Naive thymus-derived CD4-positive, alpha-beta T cell (primary cell): ENCODE measurements at regions of chr19 and their contacts with region 1.

Region 1: DNA sequence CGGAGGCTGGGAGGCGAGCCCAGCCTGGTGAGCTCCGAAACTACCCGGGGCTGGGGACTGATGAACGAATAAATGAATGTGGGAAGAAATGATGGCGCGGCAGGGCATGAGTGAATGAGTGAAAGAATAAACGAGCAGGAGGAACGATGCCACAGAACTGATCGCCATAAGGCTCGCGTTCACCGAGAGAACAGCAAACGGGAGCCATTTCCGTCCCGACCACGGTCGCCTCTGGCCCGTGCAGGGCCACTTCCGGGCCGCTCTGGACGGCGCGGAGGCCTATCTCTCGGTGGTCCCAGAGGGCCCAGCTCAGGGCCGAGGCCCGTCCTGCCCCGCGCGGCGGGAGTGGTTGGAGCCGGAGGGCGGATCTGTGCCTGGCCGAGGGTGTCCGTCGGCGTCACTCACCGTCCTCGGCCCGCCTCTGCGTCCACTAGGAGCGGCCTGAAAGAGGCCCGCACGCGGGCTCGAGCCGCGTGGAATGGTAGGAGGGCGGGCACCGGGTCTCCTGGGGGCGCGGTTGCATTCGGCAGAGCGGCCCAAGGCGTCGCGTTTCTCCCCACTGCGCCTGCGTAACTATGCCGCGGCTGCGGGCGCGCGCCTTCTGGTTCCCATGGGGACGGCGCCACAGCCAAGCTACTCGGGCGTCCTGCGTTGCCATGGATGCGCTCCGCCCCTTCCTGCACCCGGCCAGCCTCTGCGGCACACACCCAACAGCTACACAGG is at the start of gene ZNF497:
- DNase-seq: peak; percentile 91 to 96 (median 95)
- ATAC-seq: peak; percentile 92
- H3K4me3 ChIP-seq: peak within 1 kb of the TSS; percentile 99
- H3K4me3 Mint-ChIP-seq: peak within 1 kb of the TSS; percentile 89 to 99 (median 95)
- H3K27ac ChIP-seq: peak within 1 kb of the TSS; percentile 78
- H3K27ac Mint-ChIP-seq: peak within 1 kb of the TSS; percentile 71 to 96 (median 90)
- H3K4me1 ChIP-seq: peaks cover 5 to 7% of the 10 kb centered on the region in 2 donors
- H3K4me1 Mint-ChIP-seq: peaks cover 7 to 21% (median 11%) of the 10 kb centered on the region in 7 donors
- H3K27me3 ChIP-seq: no peaks in the 10 kb centered on the region
- H3K27me3 Mint-ChIP-seq: peaks cover 0 to 5% (median 0%) of the 10 kb centered on the region in 5 donors
- total RNA-seq, gene ZNF497: 1.0 to 2.7 (median 1.8) TPM

Region 2: GRCh38 chr19:58252102-58252685 is 110.2 kb before region 1 on chr19:
- CTCF ChIA-PET with region 1: no interaction called
- POLR2A ChIA-PET with region 1: no interaction called
- intact Hi-C with region 1: no loop called
- DNase-seq: no peak
- ATAC-seq: no peak
- H3K4me3 ChIP-seq: no peak overlapping the region
- H3K4me3 Mint-ChIP-seq: no peak overlapping the region
- H3K27ac ChIP-seq: no peak overlapping the region
- H3K27ac Mint-ChIP-seq: no peak overlapping the region
- H3K4me1 ChIP-seq: no peaks in the 10 kb centered on the region
- H3K4me1 Mint-ChIP-seq: no peaks in the 10 kb centered on the region
- H3K27me3 ChIP-seq: no peaks in the 10 kb centered on the region
- H3K27me3 Mint-ChIP-seq: no peaks in the 10 kb centered on the region

Region 3: GRCh38 chr19:58317476-58318072 is 44.9 kb before region 1 on chr19:
- CTCF ChIA-PET with region 1: no interaction called
- POLR2A ChIA-PET with region 1: no interaction called
- intact Hi-C with region 1: no loop called
- DNase-seq: no peak
- ATAC-seq: no peak
- H3K4me3 ChIP-seq: no peak overlapping the region
- H3K4me3 Mint-ChIP-seq: no peak overlapping the region
- H3K27ac ChIP-seq: no peak overlapping the region
- H3K27ac Mint-ChIP-seq: no peak overlapping the region
- H3K4me1 ChIP-seq: no peaks in the 10 kb centered on the region
- H3K4me1 Mint-ChIP-seq: no peaks in the 10 kb centered on the region
- H3K27me3 ChIP-seq: no peaks in the 10 kb centered on the region
- H3K27me3 Mint-ChIP-seq: no peaks in the 10 kb centered on the region

Region 4: DNA sequence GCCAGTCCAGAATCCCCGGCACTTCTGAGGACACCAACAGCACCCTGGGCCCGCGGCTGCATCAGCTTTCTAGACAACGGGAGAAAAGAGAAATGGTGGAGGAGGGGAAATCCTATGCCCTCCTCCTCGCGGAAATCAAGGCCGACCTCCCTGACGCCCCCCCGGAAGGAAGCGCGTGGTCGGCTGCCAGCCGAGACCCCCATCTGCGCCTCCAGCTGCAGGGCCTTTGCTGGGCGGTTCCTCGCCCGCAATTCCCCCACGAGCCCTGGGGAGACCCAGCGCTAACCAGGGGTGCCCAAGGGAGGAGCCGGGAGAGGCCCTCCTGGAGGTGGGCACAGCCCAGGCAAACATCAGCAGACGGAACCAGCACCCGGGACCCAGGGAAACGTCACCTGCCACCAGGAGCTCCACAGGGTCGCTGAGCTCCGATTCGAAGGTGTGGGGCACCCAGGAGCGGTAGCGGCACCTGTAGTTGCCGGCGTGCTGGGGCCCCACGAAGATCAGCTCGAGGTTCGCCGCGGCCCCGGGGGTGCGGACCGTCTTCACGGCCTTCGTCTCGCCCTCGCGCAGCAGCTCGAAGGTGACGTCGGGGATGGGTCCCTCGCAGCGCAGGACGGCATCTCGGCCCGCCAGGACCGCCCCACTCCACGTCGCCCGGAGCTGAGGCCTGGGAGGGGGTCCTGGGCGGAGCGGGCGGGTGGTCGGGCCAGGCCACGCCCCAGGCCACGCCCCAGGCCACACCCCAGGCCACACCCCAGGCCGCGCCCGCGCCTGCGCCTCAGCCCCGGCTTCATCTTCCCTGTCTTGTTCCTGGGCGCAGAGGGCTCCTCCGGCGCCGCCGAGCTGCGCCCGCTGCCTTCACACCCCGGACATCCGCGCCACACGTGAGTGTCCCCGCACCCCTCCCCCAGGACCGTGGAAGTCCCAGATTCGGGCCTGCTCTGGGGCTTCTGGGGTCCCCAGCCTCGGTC is 15.2 kb before region 1 on chr19:
- CTCF ChIA-PET with region 1: no interaction called
- POLR2A ChIA-PET with region 1: interaction called, 12 read pairs
- intact Hi-C with region 1: loop called (anchors 1 kb)
- DNase-seq: peak; percentile 50 to 78 (median 68)
- ATAC-seq: peak; percentile 98
- H3K4me3 ChIP-seq: peak overlapping the region; percentile 77
- H3K4me3 Mint-ChIP-seq: peak overlapping the region; percentile 86 to 97 (median 92)
- H3K27ac ChIP-seq: peak overlapping the region; percentile 73
- H3K27ac Mint-ChIP-seq: peak overlapping the region; percentile 71 to 93 (median 85)
- H3K4me1 ChIP-seq: peaks cover 0 to 7% of the 10 kb centered on the region in 2 donors
- H3K4me1 Mint-ChIP-seq: peaks cover 23 to 36% (median 29%) of the 10 kb centered on the region in 7 donors
- H3K27me3 ChIP-seq: no peaks in the 10 kb centered on the region
- H3K27me3 Mint-ChIP-seq: peaks cover 0 to 5% (median 0%) of the 10 kb centered on the region in 5 donors

Region 5: GRCh38 chr19:58386576-58387337 is 24.3 kb after region 1 on chr19 and contains the start of gene RPS5:
- CTCF ChIA-PET with region 1: no interaction called
- POLR2A ChIA-PET with region 1: interaction called, 12 read pairs
- intact Hi-C with region 1: loop called (anchors 1 kb)
- DNase-seq: peak; percentile 84 to 98 (median 96)
- ATAC-seq: peak; percentile 97
- H3K4me3 ChIP-seq: peak within 1 kb of the TSS; percentile 75
- H3K4me3 Mint-ChIP-seq: peak within 1 kb of the TSS; percentile 89 to 96 (median 94)
- H3K27ac ChIP-seq: peak within 1 kb of the TSS; percentile 94
- H3K27ac Mint-ChIP-seq: peak within 1 kb of the TSS; percentile 94 to 99 (median 97)
- H3K4me1 ChIP-seq: peaks cover 26% of the 10 kb centered on the region in 2 donors
- H3K4me1 Mint-ChIP-seq: peaks cover 22 to 59% (median 45%) of the 10 kb centered on the region in 7 donors
- H3K27me3 ChIP-seq: no peaks in the 10 kb centered on the region
- H3K27me3 Mint-ChIP-seq: peaks cover 0 to 3% (median 0%) of the 10 kb centered on the region in 5 donors
- total RNA-seq, gene RPS5: 911 to 1,684 (median 1,502) TPM

Region 6: DNA sequence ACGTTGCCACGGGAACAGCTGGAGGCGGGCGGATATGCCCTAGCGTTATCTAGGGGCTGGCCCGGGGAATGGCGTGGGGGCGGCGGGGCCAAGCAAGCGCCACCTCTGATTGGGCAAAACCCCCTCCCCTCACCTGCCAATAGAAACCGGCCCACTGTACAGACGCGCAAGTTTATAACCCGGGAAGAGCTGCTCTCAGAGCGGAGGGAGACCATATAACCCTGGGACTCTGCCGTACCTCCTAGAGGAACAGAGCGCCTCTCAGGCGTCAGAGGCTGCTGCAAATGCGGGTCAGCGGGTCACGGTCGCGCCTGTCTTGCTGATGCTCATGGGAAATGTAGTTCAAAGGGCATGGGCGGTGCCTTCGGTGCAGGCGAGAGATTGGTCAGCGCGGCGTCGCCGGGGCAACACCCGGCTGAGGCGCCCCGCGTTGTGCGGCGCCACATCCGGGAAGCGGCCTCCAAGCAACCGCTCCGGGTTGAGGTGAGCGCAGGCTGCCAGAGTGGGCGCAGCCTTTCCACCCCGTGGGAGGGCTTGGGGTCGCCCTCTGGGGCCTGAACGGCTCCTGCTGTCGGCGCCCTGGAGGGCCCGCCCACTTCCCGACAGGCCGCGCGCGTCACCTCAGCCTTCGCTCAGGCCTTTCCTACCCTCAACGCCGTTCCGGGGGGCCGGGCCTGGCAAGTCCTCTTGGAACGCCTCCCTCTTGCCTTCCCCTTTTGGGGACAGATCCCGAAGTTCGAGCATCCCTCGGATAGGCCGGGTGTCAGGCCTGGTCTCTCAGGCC is 113.5 kb after region 1 on chr19 and contains the start of gene ZNF446:
- CTCF ChIA-PET with region 1: no interaction called
- POLR2A ChIA-PET with region 1: interaction called, 4 read pairs
- intact Hi-C with region 1: loop called in 1 of 2 experiments (anchors 1 kb)
- DNase-seq: peak; percentile 84 to 97 (median 96)
- ATAC-seq: peak; percentile 92
- H3K4me3 ChIP-seq: peak within 1 kb of the TSS; percentile 77
- H3K4me3 Mint-ChIP-seq: peak within 1 kb of the TSS; percentile 78 to 99 (median 96)
- H3K27ac ChIP-seq: peak within 1 kb of the TSS; percentile 91
- H3K27ac Mint-ChIP-seq: peak within 1 kb of the TSS; percentile 87 to 100 (median 99)
- H3K4me1 ChIP-seq: peaks cover 14 to 16% of the 10 kb centered on the region in 2 donors
- H3K4me1 Mint-ChIP-seq: peaks cover 6 to 29% (median 17%) of the 10 kb centered on the region in 7 donors
- H3K27me3 ChIP-seq: no peaks in the 10 kb centered on the region
- H3K27me3 Mint-ChIP-seq: no peaks in the 10 kb centered on the region
- total RNA-seq, gene ZNF446: 9.5 to 20.0 (median 15.1) TPM

Region 7: GRCh38 chr19:58554494-58555368 is 192.3 kb after region 1 on chr19 and contains the start of gene CHMP2A:
- CTCF ChIA-PET with region 1: no interaction called
- POLR2A ChIA-PET with region 1: no interaction called
- intact Hi-C with region 1: no loop called
- DNase-seq: peak; percentile 92 to 98 (median 93)
- ATAC-seq: peak; percentile 59
- H3K4me3 ChIP-seq: peak within 1 kb of the TSS; percentile 91
- H3K4me3 Mint-ChIP-seq: peak within 1 kb of the TSS; percentile 93 to 100 (median 96)
- H3K27ac ChIP-seq: peak within 1 kb of the TSS; percentile 97
- H3K27ac Mint-ChIP-seq: peak within 1 kb of the TSS; percentile 96 to 100 (median 98)
- H3K4me1 ChIP-seq: peaks cover 34 to 37% of the 10 kb centered on the region in 2 donors
- H3K4me1 Mint-ChIP-seq: peaks cover 24 to 65% (median 57%) of the 10 kb centered on the region in 7 donors
- H3K27me3 ChIP-seq: no peaks in the 10 kb centered on the region
- H3K27me3 Mint-ChIP-seq: no peaks in the 10 kb centered on the region
- total RNA-seq, gene CHMP2A: 64.3 to 131 (median 71.2) TPM